HEK293 (cell line): ENCODE measurements at regions of chr5 and their contacts with region 1.

Region 1: GRCh38 chr5:112419986-112420864 is 1.1 kb upstream of the EPB41L4A start:
- H3K4me3 ChIP-seq: peak overlapping the region; percentile 66
- H3K27ac ChIP-seq: peak overlapping the region; percentile 59; the same call in 1 of the 2 replicates
- H3K4me1 ChIP-seq: no peaks in the 10 kb centered on the region
- CTCF ChIP-seq: peak; percentile 99

Region 2: GRCh38 chr5:112097768-112098167 is 322.5 kb before region 1 on chr5:
- CTCF ChIA-PET with region 1: no interaction called
- POLR2A ChIA-PET with region 1: no interaction called
- H3K4me3 ChIP-seq: no peak overlapping the region
- H3K27ac ChIP-seq: no peak overlapping the region
- H3K4me1 ChIP-seq: no peaks in the 10 kb centered on the region
- CTCF ChIP-seq: no peak

Region 3: GRCh38 chr5:112160652-112161391 is 259.4 kb before region 1 on chr5:
- CTCF ChIA-PET with region 1: interaction called, 5 read pairs
- POLR2A ChIA-PET with region 1: interaction called, 23 read pairs
- H3K4me3 ChIP-seq: peak overlapping the region; percentile 90
- H3K27ac ChIP-seq: peak overlapping the region; percentile 75; the same call in 1 of the 2 replicates
- H3K4me1 ChIP-seq: peaks cover 5% of the 10 kb centered on the region
- CTCF ChIP-seq: peak; percentile 100

Region 4: GRCh38 chr5:112203229-112203628 is 217.0 kb before region 1 on chr5:
- CTCF ChIA-PET with region 1: interaction called, 13 read pairs
- POLR2A ChIA-PET with region 1: no interaction called
- H3K4me3 ChIP-seq: no peak overlapping the region
- H3K27ac ChIP-seq: no peak overlapping the region
- H3K4me1 ChIP-seq: peaks cover 6% of the 10 kb centered on the region
- CTCF ChIP-seq: no peak

Region 5: DNA sequence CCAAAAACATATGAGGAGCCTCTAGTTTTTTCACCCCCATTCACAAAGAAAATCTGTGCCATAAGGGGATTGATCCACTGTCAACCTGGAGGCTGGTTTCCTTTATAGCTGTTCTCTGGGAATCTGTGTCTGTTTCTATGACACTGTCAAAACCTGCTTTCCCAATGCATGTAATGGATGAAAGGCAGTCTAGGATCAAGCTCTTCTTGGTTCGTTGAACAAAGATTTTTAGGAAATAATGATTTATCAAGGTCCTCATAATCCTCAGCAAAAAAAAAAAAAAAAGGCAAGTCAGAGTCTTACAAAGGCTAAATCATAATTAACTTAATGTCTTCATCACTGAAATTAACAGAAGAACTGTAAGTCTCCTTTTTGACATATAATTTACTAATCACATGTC is 17.2 kb before region 1 on chr5:
- CTCF ChIA-PET with region 1: interaction called, 12 read pairs
- POLR2A ChIA-PET with region 1: no interaction called
- H3K4me3 ChIP-seq: no peak overlapping the region
- H3K27ac ChIP-seq: no peak overlapping the region
- H3K4me1 ChIP-seq: peaks cover 4% of the 10 kb centered on the region; the same call in 1 of the 2 replicates
- CTCF ChIP-seq: no peak

Region 6: GRCh38 chr5:112492291-112492690 is 72.1 kb after region 1 on chr5:
- CTCF ChIA-PET with region 1: interaction called, 11 read pairs
- POLR2A ChIA-PET with region 1: no interaction called
- H3K4me3 ChIP-seq: no peak overlapping the region
- H3K27ac ChIP-seq: no peak overlapping the region
- H3K4me1 ChIP-seq: no peaks in the 10 kb centered on the region
- CTCF ChIP-seq: peak; percentile 84

Region 7: DNA sequence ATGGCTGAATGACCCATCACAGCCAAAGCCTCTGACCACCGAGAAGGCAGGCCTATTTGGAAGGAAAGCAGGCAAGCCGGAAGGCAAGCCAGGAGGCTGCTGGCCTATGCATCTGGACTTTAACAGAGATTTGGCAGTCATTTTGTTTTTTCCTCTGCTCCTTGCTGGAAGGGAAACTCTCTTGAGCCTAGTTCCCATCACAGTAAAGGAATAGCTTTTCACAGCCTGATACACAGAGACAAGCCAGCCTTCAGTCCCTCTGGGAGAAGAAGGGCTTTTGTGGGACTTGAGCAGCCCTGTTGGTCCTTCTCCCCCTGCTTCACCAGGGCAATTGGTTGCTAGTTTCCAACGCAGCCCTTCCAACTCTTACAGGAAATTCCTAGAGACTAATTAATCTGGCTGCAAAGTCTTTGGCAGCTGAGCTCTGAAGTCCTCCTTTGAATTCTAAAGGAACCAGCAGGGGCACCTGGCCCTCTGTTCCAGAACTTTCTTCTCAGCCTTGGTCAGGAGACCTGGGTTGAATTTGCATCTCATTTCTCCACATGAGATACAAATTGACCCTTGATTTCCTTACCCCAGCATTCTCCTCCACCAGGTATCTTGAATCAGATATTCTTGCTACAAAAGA is 156.2 kb after region 1 on chr5:
- CTCF ChIA-PET with region 1: no interaction called
- POLR2A ChIA-PET with region 1: no interaction called
- H3K4me3 ChIP-seq: no peak overlapping the region
- H3K27ac ChIP-seq: no peak overlapping the region
- H3K4me1 ChIP-seq: no peaks in the 10 kb centered on the region
- CTCF ChIP-seq: no peak